ENCODE measurements at regions of chr11 and their contacts with region 1.

Region 1: DNA sequence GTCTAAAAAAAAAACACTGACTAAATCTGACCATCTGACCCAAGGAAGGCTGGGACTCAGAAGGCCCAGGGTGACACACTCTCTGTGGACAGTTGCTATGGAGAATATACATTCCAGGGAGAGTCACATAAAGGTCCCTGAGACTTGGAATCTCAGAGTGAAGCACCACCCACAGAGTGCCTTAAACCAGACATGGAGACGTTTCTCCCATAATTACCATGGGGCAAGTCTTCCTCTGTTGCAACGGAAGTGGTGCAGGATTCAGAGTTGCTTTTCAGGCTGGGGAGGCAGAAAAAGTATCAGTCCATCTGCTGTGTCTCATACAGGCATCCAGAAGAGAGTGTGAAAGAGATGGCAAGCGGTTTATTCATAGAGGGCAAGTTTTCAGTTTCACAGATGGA is 58.7 kb upstream of the SLN start:
- DNase-seq: peak; percentile 24
- H3K4me3 Mint-ChIP-seq: no peak overlapping the region
- H3K27ac Mint-ChIP-seq: peak overlapping the region; percentile 35
- H3K4me1 Mint-ChIP-seq: peaks cover 25% of the 10 kb centered on the region
- H3K27me3 Mint-ChIP-seq: peaks cover 13% of the 10 kb centered on the region

Region 2: DNA sequence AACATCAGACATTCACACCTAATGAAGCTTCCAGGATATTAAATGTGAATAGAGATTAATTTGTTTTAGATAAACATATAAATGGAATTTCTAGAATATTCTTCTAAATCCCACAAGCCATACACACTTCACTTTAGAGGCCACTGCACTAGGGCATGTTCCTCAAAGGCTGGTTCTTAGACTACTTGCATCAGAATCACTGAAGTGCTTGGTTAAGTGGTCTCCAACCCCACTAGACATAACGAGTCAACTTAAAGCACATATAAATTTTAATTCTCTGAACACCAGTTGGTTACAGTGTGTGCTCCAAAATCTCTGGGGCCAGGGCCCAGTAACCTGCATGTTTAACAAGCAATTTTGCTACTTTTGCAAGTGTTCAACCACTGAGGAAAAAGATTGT is 197.1 kb before region 1 on chr11:
- CTCF ChIA-PET with region 1: interaction called, 3 read pairs
- POLR2A ChIA-PET with region 1: no interaction called
- intact Hi-C with region 1: loop called (anchors 1 kb)
- DNase-seq: no peak
- H3K4me3 Mint-ChIP-seq: no peak overlapping the region
- H3K27ac Mint-ChIP-seq: no peak overlapping the region
- H3K4me1 Mint-ChIP-seq: peaks cover 4% of the 10 kb centered on the region
- H3K27me3 Mint-ChIP-seq: peaks cover 1% of the 10 kb centered on the region

Region 3: DNA sequence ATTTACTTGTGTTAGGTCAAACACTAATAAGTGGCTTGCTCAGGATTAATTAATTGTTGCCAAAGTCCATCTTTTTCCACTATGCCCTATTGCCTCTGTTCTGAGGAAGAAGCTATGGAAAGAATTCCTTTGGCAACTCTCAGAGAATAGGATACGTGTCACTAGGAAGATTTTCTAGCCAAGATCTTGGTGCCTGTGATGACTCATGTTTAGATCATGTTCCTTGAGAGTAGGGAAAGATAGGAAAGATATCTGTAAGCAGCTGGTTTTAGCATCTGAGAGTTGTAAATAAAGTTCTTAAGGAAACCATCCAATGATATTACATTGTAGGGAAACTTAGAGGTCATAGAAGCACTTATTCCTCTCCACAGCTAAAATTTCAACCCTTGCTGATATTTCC is 74.4 kb before region 1 on chr11:
- CTCF ChIA-PET with region 1: interaction called, 6 read pairs
- POLR2A ChIA-PET with region 1: no interaction called
- intact Hi-C with region 1: loop called (anchors 5 kb)
- DNase-seq: no peak
- H3K4me3 Mint-ChIP-seq: no peak overlapping the region
- H3K27ac Mint-ChIP-seq: no peak overlapping the region
- H3K4me1 Mint-ChIP-seq: no peaks in the 10 kb centered on the region
- H3K27me3 Mint-ChIP-seq: peaks cover 29% of the 10 kb centered on the region

Region 4: GRCh38 chr11:107785401-107785800 is 14.8 kb after region 1 on chr11:
- CTCF ChIA-PET with region 1: interaction called, 11 read pairs
- POLR2A ChIA-PET with region 1: interaction called, 5 read pairs
- intact Hi-C with region 1: loop called (anchors 1 kb)
- DNase-seq: peak; percentile 79
- H3K4me3 Mint-ChIP-seq: no peak overlapping the region
- H3K27ac Mint-ChIP-seq: peak overlapping the region; percentile 49
- H3K4me1 Mint-ChIP-seq: peaks cover 15% of the 10 kb centered on the region
- H3K27me3 Mint-ChIP-seq: no peaks in the 10 kb centered on the region

Region 5: DNA sequence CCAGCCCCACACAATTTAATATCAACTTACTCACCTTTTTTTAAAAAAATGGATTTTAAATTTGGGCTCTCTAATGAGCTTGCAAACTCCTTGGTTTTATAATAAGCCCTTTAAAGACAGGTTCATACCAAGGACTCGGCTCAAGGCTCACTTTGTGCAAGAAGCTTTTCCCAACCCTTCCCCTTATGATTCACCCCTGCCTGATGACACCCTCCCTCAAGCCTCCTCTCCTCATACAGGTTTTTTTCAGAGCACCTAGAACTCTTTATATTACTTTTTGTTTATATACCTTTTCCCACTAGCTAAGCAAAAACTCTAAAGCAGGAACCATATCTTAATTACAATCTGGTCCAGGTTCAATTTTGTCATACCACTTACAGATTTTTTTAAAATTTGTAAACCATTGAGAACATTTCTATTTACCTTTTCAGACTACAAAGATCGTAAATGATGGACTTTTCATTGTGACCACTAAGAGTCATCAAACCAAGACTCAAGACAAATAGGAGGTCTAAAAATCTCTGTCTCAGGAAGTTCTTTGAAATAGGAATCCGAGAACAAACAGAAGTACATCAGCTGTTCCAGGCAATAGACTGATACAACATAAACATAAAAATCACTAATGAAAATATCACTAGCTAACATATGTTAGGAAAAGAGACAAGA is 836.1 kb after region 1 on chr11:
- CTCF ChIA-PET with region 1: no interaction called
- POLR2A ChIA-PET with region 1: no interaction called
- intact Hi-C with region 1: no loop called
- DNase-seq: no peak
- H3K4me3 Mint-ChIP-seq: no peak overlapping the region
- H3K27ac Mint-ChIP-seq: no peak overlapping the region
- H3K4me1 Mint-ChIP-seq: no peaks in the 10 kb centered on the region
- H3K27me3 Mint-ChIP-seq: peaks cover 2% of the 10 kb centered on the region

Measured in activated CD4-positive, alpha-beta memory T cell treated with anti-CD3 and anti-CD28 coated beads for 36 hours (primary cell).